ENCODE measurements at regions of chr2 and their contacts with region 1.

Region 1: DNA sequence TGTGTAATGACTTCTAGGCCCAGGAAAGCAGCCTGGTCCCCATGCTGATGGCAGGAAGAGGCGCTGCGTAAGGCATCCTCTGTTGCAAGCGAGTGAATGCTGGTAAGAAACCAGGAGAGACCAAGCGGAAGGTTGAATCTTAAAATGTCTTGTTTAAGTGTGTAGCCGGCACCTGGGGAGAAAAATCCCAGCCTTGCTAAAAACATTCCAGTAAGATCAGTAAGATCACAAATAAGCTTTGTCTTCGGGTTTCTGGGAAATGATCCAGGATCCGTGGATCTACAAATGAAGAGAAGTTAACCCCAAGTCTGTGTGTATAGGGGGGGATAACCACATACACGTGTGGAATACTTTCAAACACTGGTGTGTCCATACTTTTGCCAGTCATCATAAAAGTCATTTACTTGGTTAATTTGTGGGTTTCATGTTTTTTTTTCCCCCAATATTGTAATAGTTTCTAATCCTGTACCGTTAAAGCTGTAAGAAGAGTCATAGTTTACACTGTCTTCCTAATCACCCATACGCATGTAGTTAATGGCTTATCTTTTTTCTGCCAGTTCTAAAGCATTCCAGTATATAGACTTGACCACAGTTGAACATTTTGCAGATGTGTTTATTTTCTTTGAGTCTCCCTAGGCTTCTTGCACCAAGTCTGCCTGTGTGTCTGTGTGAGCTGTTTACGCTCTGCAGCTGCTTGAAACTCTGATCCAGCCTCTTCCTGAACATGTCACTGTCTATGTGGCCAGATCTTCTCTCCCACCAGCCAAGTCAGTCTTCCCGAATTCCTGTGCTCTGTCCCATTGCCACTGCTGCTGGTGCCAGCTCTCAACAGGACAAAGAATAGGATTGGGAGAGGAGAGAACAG is 135.9 kb upstream of the ARL4C start:
- DNase-seq: peak; percentile 32
- ATAC-seq: peak; percentile 13; the same call in 1 of the 2 replicates
- H3K4me3 ChIP-seq: no peak overlapping the region
- H3K27ac ChIP-seq: peak overlapping the region; percentile 54
- H3K4me1 ChIP-seq: peaks cover 21% of the 10 kb centered on the region
- H3K27me3 ChIP-seq: no peaks in the 10 kb centered on the region
- CTCF ChIP-seq: no peak

Region 2: GRCh38 chr2:234544659-234545611 is 87.8 kb before region 1 on chr2:
- CTCF ChIA-PET with region 1: no interaction called
- POLR2A ChIA-PET with region 1: no interaction called
- intact Hi-C with region 1: no loop called
- DNase-seq: peak; percentile 78
- ATAC-seq: peak; percentile 91
- H3K4me3 ChIP-seq: no peak overlapping the region
- H3K27ac ChIP-seq: no peak overlapping the region
- H3K4me1 ChIP-seq: peaks cover 5% of the 10 kb centered on the region; the same call in 1 of the 2 replicates
- H3K27me3 ChIP-seq: no peaks in the 10 kb centered on the region
- CTCF ChIP-seq: peak; percentile 86

Region 3: DNA sequence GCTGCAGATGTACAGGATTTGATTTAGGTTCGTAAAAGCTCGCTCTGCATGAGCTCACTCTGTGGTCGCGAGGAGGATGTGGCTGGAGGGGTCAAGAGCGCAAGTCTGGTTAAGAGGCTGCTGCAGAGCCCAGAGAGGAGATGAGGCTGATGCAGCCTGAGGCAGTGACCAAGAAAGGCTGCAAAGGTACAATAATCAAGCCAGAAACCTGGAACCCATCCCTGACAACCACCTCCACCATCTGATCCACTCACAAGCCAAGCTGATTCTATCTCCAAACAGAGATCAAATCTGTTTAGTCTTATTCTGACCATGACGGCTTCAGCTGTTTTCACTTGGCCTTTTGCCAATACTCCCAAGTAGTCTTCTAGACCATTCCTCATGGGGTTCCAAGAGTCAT is 77.0 kb before region 1 on chr2:
- CTCF ChIA-PET with region 1: no interaction called
- POLR2A ChIA-PET with region 1: interaction called, 7 read pairs
- intact Hi-C with region 1: loop called (anchors 5 kb)
- DNase-seq: peak; percentile 35
- ATAC-seq: no peak
- H3K4me3 ChIP-seq: no peak overlapping the region
- H3K27ac ChIP-seq: 0 out of 2 replicates have a peak overlapping the region, but pooled peaks have one; percentile 42
- H3K4me1 ChIP-seq: peaks cover 38% of the 10 kb centered on the region
- H3K27me3 ChIP-seq: no peaks in the 10 kb centered on the region
- CTCF ChIP-seq: no peak

Region 4: DNA sequence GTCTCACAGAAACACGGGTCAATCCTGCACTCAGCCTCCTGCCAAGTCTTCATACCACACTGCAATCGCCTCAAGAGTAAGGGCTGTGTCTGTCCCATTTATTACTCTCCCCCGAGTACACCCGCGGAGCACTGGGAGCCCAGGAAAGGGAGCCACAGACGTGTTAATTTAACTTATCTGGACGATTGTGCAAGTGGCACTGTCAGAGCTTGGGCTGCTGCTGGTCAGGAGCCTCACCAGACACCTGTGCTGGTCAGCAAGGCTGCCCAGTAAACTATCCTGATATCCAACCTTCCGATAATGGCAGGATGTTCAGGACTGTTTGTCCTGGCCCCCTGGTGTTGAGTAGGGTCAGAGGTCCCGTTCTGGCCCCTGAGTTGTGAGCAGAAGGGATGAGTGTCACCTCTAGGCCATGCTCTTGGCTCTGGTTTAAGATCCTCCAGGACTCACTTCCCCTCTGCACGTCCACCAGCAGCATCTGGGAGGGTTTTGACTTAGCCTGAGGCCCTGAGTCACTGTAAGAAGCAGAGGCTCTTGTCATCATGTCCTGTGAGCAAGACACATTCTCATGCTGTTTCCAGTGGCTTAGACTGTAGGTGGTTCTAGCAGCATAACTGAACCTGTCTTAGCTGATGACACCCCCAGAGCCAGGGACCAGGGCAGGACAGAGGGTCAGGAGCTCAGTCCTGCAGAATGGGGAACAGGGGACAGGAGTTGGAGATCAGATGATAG is 53.4 kb before region 1 on chr2:
- CTCF ChIA-PET with region 1: no interaction called
- POLR2A ChIA-PET with region 1: no interaction called
- intact Hi-C with region 1: no loop called
- DNase-seq: peak; percentile 53
- ATAC-seq: peak; percentile 56
- H3K4me3 ChIP-seq: no peak overlapping the region
- H3K27ac ChIP-seq: no peak overlapping the region
- H3K4me1 ChIP-seq: no peaks in the 10 kb centered on the region
- H3K27me3 ChIP-seq: no peaks in the 10 kb centered on the region
- CTCF ChIP-seq: no peak

Measured in PC-3 (cell line).